ENCODE measurements at regions of chr21 and their contacts with region 1.

Region 1: DNA sequence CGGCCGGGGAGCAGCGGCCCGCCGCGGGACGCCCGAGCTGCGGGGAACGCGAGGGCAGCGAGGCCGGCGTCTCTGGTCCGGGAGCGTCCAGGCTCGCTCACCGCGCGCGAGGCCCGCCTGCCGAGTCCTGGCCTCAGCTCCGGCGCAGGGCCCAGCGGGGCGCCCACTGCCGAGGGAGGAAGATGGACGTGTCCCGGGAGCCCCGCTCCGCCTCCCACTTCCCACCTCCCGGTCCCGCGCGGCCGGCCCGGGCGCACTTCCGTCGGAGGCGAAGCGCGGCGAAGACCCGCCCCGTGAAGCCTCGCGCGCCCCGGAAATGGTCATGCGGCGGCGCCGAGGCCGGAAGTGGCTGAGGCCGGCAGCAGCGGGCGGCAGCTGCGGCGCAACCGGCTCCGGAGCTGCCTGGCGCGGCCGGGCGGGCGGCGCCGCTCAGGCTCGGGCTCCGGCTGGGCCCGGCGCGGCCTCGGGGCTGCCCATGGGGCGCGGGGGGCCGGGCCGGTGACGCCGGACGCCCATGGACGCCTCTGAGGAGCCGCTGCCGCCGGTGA is at the start of gene TRAPPC10:
- DNase-seq: peak; percentile 52 to 90 (median 72)
- ATAC-seq: peak; percentile 45
- H3K4me3 ChIP-seq: peak within 1 kb of the TSS; percentile 76
- H3K4me3 Mint-ChIP-seq: peak within 1 kb of the TSS; percentile 93
- H3K27ac ChIP-seq: peak within 1 kb of the TSS; percentile 68 to 75
- H3K27ac Mint-ChIP-seq: peak within 1 kb of the TSS; percentile 94
- H3K4me1 ChIP-seq: peaks cover 42% of the 10 kb centered on the region
- H3K4me1 Mint-ChIP-seq: peaks cover 45% of the 10 kb centered on the region
- H3K27me3 ChIP-seq: no peaks in the 10 kb centered on the region
- H3K27me3 Mint-ChIP-seq: no peaks in the 10 kb centered on the region
- CTCF ChIP-seq: no peak
- total RNA-seq, gene TRAPPC10: 98.1 to 101 TPM

Region 2: GRCh38 chr21:42892931-42893755 is 1118.9 kb before region 1 on chr21 and contains the start of gene NDUFV3:
- CTCF ChIA-PET with region 1: no interaction called
- POLR2A ChIA-PET with region 1: no interaction called
- intact Hi-C with region 1: loop called in 1 of 2 experiments (anchors 5 kb)
- DNase-seq: peak; percentile 100
- ATAC-seq: peak; percentile 93
- H3K4me3 ChIP-seq: peak within 1 kb of the TSS; percentile 76
- H3K4me3 Mint-ChIP-seq: peak within 1 kb of the TSS; percentile 91
- H3K27ac ChIP-seq: peak within 1 kb of the TSS; percentile 86
- H3K27ac Mint-ChIP-seq: peak within 1 kb of the TSS; percentile 97
- H3K4me1 ChIP-seq: peaks cover 12% of the 10 kb centered on the region
- H3K4me1 Mint-ChIP-seq: peaks cover 19% of the 10 kb centered on the region
- H3K27me3 ChIP-seq: no peaks in the 10 kb centered on the region
- H3K27me3 Mint-ChIP-seq: no peaks in the 10 kb centered on the region
- CTCF ChIP-seq: no peak
- total RNA-seq, gene NDUFV3: 15.3 to 15.8 TPM

Region 3: GRCh38 chr21:44024887-44025362 is 12.9 kb after region 1 on chr21:
- CTCF ChIA-PET with region 1: interaction called, 4 read pairs
- POLR2A ChIA-PET with region 1: interaction called, 12 read pairs
- intact Hi-C with region 1: loop called in 1 of 2 experiments (anchors 1 kb)
- DNase-seq: peak in 2 of 14 experiments; percentile 42 to 51
- ATAC-seq: no peak
- H3K4me3 ChIP-seq: no peak overlapping the region
- H3K4me3 Mint-ChIP-seq: peak overlapping the region; percentile 16
- H3K27ac ChIP-seq: no peak overlapping the region
- H3K27ac Mint-ChIP-seq: peak overlapping the region; percentile 55
- H3K4me1 ChIP-seq: peaks cover 72% of the 10 kb centered on the region
- H3K4me1 Mint-ChIP-seq: peaks cover 93% of the 10 kb centered on the region
- H3K27me3 ChIP-seq: no peaks in the 10 kb centered on the region
- H3K27me3 Mint-ChIP-seq: no peaks in the 10 kb centered on the region
- CTCF ChIP-seq: no peak

Region 4: DNA sequence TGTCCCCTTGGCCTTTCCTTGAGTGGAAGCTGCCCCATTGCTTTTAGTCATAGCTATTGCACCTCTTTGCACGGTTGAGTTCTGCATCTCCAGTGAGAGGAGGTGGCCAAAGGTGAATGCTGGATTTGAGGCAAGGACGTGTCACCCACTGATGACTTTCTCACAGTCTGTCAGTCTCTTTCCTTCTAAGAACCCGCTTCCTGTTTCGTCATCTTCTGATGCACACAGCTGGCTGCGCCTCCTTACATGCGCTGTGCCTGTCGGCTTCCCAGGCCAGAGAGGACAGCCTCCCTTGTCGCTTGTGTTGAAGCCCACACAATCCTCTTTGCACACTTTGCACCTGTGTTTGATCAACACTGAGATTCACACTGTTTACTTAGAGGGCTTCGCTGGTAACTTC is 53.4 kb after region 1 on chr21:
- CTCF ChIA-PET with region 1: interaction called, 9 read pairs
- POLR2A ChIA-PET with region 1: interaction called, 7 read pairs
- intact Hi-C with region 1: loop called in 1 of 2 experiments (anchors 1 kb)
- DNase-seq: peak; percentile 58 to 94 (median 75)
- ATAC-seq: peak; percentile 91
- H3K4me3 ChIP-seq: peak overlapping the region; percentile 20
- H3K4me3 Mint-ChIP-seq: peak overlapping the region; percentile 67
- H3K27ac ChIP-seq: peak overlapping the region; percentile 55 to 91
- H3K27ac Mint-ChIP-seq: peak overlapping the region; percentile 92
- H3K4me1 ChIP-seq: peaks cover 18% of the 10 kb centered on the region
- H3K4me1 Mint-ChIP-seq: peaks cover 60% of the 10 kb centered on the region
- H3K27me3 ChIP-seq: no peaks in the 10 kb centered on the region
- H3K27me3 Mint-ChIP-seq: no peaks in the 10 kb centered on the region
- CTCF ChIP-seq: no peak

Region 5: GRCh38 chr21:44083631-44084291 is 71.7 kb after region 1 on chr21:
- CTCF ChIA-PET with region 1: interaction called, 8 read pairs
- POLR2A ChIA-PET with region 1: interaction called, 42 read pairs
- intact Hi-C with region 1: loop called (anchors 1 to 2 kb)
- DNase-seq: peak; percentile 44 to 90 (median 66)
- ATAC-seq: peak; percentile 81
- H3K4me3 ChIP-seq: peak overlapping the region; percentile 41
- H3K4me3 Mint-ChIP-seq: peak overlapping the region; percentile 69
- H3K27ac ChIP-seq: peak overlapping the region; percentile 80 to 91
- H3K27ac Mint-ChIP-seq: peak overlapping the region; percentile 95
- H3K4me1 ChIP-seq: peaks cover 96% of the 10 kb centered on the region
- H3K4me1 Mint-ChIP-seq: peaks cover 85% of the 10 kb centered on the region
- H3K27me3 ChIP-seq: no peaks in the 10 kb centered on the region
- H3K27me3 Mint-ChIP-seq: no peaks in the 10 kb centered on the region
- CTCF ChIP-seq: no peak

Region 6: GRCh38 chr21:44695184-44695583 is 683.1 kb after region 1 on chr21:
- CTCF ChIA-PET with region 1: no interaction called
- POLR2A ChIA-PET with region 1: no interaction called
- intact Hi-C with region 1: no loop called
- DNase-seq: no peak
- ATAC-seq: no peak
- H3K4me3 ChIP-seq: no peak overlapping the region
- H3K4me3 Mint-ChIP-seq: no peak overlapping the region
- H3K27ac ChIP-seq: no peak overlapping the region
- H3K27ac Mint-ChIP-seq: no peak overlapping the region
- H3K4me1 ChIP-seq: peaks cover 5% of the 10 kb centered on the region
- H3K4me1 Mint-ChIP-seq: peaks cover 19% of the 10 kb centered on the region
- H3K27me3 ChIP-seq: peaks cover 20 to 30% of the 10 kb centered on the region in 2 experiments
- H3K27me3 Mint-ChIP-seq: peaks cover 55% of the 10 kb centered on the region
- CTCF ChIP-seq: no peak